T-cell (primary cell): ENCODE measurements at regions of chr5 and their contacts with region 1.

Region 1: DNA sequence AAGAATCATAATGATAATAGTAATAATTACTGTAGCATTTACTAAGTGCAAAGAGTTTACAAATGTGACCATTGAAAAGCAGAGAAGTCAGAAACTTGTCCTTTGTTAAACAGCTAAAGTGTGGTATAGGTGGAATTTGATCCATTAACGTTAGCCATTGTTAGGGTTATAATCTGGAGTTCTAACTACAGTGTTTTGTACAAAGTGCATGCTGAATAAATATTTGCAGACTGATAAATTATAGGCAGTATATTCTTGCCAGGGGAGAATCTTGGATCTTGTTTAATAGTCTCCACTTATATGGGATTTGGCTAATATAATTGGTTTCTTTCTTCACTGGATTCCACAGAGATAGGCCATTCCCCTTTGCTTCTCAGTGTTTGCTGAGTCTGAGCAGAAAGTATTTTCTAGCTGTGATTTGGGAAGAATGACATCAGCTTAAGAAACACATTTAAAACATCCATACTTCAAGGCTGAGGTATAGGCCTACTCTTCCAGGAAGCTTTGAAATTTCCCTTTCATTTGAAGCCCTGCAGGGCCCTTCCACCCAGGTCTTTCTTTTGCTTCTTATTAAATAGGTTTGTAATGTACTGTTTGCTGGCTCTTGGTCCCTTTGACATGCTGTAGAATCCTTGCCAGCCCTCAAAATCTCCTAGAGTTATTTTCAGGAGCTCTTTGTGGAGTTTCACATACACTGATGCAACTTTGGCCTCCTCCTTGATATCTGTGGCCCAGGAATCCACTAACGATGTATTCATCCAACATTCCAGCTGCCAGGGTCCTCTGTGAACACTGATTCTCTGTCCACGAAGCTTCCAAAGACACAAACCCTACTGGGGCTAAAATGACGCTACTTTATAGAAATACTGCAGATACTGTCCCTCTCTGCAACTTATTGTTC is 51.4 kb downstream of the ATP10B start:
- DNase-seq: no peak
- ATAC-seq: no peak
- H3K4me3 ChIP-seq: no peak overlapping the region
- H3K4me3 Mint-ChIP-seq: no peak overlapping the region
- H3K27ac ChIP-seq: no peak overlapping the region
- H3K27ac Mint-ChIP-seq: no peak overlapping the region
- H3K4me1 ChIP-seq: no peaks in the 10 kb centered on the region
- H3K4me1 Mint-ChIP-seq: no peaks in the 10 kb centered on the region
- H3K27me3 ChIP-seq: no peaks in the 10 kb centered on the region
- H3K27me3 Mint-ChIP-seq: peaks cover 5 to 6% of the 10 kb centered on the region in 2 donors

Region 2: GRCh38 chr5:159310511-159310910 is 1490.1 kb before region 1 on chr5:
- CTCF ChIA-PET with region 1: interaction called in 1 of 2 experiments, 11 read pairs
- POLR2A ChIA-PET with region 1: no interaction called
- DNase-seq: peak in 33 of 35 experiments; percentile 3 to 59 (median 27)
- ATAC-seq: peak; percentile 83 to 97 (median 93)
- H3K4me3 ChIP-seq: peak overlapping the region in 1 of 2 donors; percentile 25
- H3K4me3 Mint-ChIP-seq: peak overlapping the region; percentile 25 to 70 (median 37)
- H3K27ac ChIP-seq: no peak overlapping the region
- H3K27ac Mint-ChIP-seq: no peak overlapping the region
- H3K4me1 ChIP-seq: peaks cover 0 to 10% of the 10 kb centered on the region in 2 experiments
- H3K4me1 Mint-ChIP-seq: peaks cover 9 to 11% (median 10%) of the 10 kb centered on the region in 3 donors
- H3K27me3 ChIP-seq: peaks cover 0 to 24% of the 10 kb centered on the region in 2 experiments
- H3K27me3 Mint-ChIP-seq: peaks cover 6 to 10% of the 10 kb centered on the region in 2 donors

Region 3: DNA sequence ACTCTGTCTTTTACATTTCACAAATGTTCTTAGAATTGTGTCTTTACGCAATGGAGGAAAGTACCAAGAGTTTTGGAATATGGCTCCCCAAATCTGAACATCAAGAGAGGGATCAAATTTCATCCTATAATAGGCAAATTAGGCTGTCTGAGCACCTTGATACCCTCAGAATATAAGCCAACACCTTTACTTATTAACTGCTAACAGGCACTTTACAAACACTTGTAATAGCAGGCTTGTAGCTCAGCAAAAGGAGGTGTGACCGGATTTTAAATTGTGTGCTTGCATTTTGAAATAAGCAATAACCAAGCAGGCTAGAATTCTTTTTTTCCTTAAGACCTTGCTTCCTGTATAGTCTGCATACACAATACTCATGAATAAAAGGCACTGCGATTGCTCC is 40.6 kb before region 1 on chr5:
- CTCF ChIA-PET with region 1: no interaction called
- POLR2A ChIA-PET with region 1: no interaction called
- DNase-seq: no peak
- ATAC-seq: no peak
- H3K4me3 ChIP-seq: no peak overlapping the region
- H3K4me3 Mint-ChIP-seq: no peak overlapping the region
- H3K27ac ChIP-seq: no peak overlapping the region
- H3K27ac Mint-ChIP-seq: no peak overlapping the region
- H3K4me1 ChIP-seq: no peaks in the 10 kb centered on the region
- H3K4me1 Mint-ChIP-seq: no peaks in the 10 kb centered on the region
- H3K27me3 ChIP-seq: peaks cover 0 to 7% of the 10 kb centered on the region in 2 experiments
- H3K27me3 Mint-ChIP-seq: peaks cover 6 to 9% of the 10 kb centered on the region in 2 donors

Region 4: GRCh38 chr5:161167016-161167767 is 366.6 kb after region 1 on chr5:
- CTCF ChIA-PET with region 1: no interaction called
- POLR2A ChIA-PET with region 1: no interaction called
- DNase-seq: no peak
- ATAC-seq: no peak
- H3K4me3 ChIP-seq: no peak overlapping the region
- H3K4me3 Mint-ChIP-seq: no peak overlapping the region
- H3K27ac ChIP-seq: no peak overlapping the region
- H3K27ac Mint-ChIP-seq: no peak overlapping the region
- H3K4me1 ChIP-seq: no peaks in the 10 kb centered on the region
- H3K4me1 Mint-ChIP-seq: no peaks in the 10 kb centered on the region
- H3K27me3 ChIP-seq: no peaks in the 10 kb centered on the region
- H3K27me3 Mint-ChIP-seq: no peaks in the 10 kb centered on the region